MCF 10A (cell line): ENCODE measurements at regions of chr18 and their contacts with region 1.

Region 1: GRCh38 chr18:49459404-49460171 is 857 bp downstream of the DYM start:
- DNase-seq: no peak
- H3K4me3 Mint-ChIP-seq: peak overlapping the region; percentile 67
- H3K27ac Mint-ChIP-seq: peak overlapping the region; percentile 96
- H3K4me1 Mint-ChIP-seq: peaks cover 25% of the 10 kb centered on the region
- H3K27me3 Mint-ChIP-seq: no peaks in the 10 kb centered on the region
- CTCF ChIP-seq: no peak

Region 2: DNA sequence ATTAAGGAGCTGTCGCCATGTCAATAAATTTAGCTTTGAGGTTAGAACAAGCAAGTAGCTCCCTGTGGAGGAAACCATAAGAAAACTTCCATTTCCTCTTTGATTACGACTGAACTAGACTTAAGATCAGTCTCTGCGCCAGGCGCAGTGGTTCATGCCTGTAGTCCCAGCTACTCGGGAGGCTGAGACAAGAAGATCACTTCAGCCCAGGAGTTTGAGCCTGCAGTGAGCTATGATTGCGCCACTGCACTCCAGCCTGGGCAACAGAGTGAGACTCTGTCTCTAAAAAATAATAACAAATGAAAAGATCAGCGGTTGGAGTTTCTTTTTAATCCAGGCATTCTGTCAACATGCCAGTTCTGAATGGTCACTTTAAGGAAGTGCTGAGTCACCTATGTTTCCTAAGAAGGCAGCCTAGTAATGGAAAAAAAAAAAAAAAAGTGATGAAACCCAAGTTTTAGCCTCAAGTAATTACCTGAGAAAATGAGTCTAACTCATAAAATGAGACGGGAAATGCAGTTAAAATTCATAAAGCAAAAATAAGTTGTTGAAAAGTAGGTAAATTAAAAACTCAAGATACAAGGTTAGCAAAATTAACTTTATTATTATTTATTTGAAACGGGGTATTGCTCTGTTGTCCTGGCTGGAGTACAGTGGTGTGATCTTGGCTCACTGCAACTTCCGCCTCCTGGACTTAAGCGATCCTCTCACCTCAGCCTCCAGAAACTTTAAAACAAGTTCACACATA is 17.2 kb after region 1 on chr18:
- CTCF ChIA-PET with region 1: no interaction called
- POLR2A ChIA-PET with region 1: interaction called, 13 read pairs
- intact Hi-C with region 1: no loop called
- DNase-seq: peak; percentile 91
- H3K4me3 Mint-ChIP-seq: peak overlapping the region; percentile 22
- H3K27ac Mint-ChIP-seq: peak overlapping the region; percentile 89
- H3K4me1 Mint-ChIP-seq: peaks cover 12% of the 10 kb centered on the region
- H3K27me3 Mint-ChIP-seq: no peaks in the 10 kb centered on the region
- CTCF ChIP-seq: no peak